ENCODE measurements at regions of chr20 and their contacts with region 1.

Region 1: GRCh38 chr20:23050847-23051631 is 1.6 kb upstream of the THBD start:
- DNase-seq: peak; percentile 86 to 91
- ATAC-seq: peak; percentile 34 to 51 (median 50)
- H3K4me3 ChIP-seq: peak overlapping the region; percentile 75
- H3K27ac ChIP-seq: peak overlapping the region; percentile 97
- H3K4me1 ChIP-seq: peaks cover 12% of the 10 kb centered on the region
- H3K27me3 ChIP-seq: no peaks in the 10 kb centered on the region
- CTCF ChIP-seq: peak; percentile 77

Region 2: DNA sequence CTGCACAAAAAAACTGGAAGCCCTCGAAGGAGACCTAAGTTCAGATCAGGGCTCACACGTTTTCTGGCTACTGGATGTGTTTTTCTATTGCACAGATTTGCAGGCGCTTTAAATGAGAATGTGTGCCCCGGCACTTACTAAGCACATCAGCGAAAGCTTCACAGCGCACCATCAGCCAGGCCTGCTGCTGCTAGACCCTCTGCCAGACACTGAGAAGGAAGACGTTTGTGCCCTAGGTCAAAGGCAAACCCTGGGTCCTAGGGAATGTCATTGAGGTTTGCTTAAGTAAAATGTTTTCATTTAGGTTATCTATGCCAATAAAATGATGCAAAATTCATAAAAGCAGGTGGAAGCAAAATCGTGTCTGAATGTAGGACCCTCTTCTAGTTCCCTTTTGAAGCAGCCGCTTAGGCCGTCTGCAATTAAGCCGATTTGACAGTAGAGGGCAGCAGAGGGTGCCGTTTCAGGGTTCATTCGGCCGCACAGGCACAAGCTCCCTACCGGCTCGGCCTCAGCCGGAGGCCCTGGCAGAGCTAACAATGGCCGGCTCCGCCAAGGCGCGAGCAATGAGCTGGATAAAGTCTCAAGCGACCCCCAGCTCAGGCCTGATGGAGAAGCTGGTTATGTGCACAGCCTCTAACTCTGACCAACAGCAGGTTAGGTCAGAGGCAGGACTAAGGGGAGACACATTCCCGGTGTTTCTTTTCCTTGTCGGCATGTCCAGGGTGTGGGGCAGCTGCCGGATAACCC is 359.5 kb before region 1 on chr20:
- intact Hi-C with region 1: loop called (anchors 2 to 10 kb)
- DNase-seq: peak; percentile 73 to 85
- ATAC-seq: peak; percentile 93 to 97 (median 97)
- H3K4me3 ChIP-seq: peak overlapping the region; percentile 45
- H3K27ac ChIP-seq: no peak overlapping the region
- H3K4me1 ChIP-seq: peaks cover 17% of the 10 kb centered on the region
- H3K27me3 ChIP-seq: no peaks in the 10 kb centered on the region
- CTCF ChIP-seq: peak; percentile 93

Region 3: GRCh38 chr20:23086056-23086566 is 35.1 kb after region 1 on chr20 and contains the start of gene CD93:
- intact Hi-C with region 1: loop called in 1 of 2 experiments (anchors 5 kb)
- DNase-seq: no peak
- ATAC-seq: peak; percentile 21 to 56 (median 37)
- H3K4me3 ChIP-seq: peak within 1 kb of the TSS; percentile 67
- H3K27ac ChIP-seq: peak within 1 kb of the TSS; percentile 82
- H3K4me1 ChIP-seq: no peaks in the 10 kb centered on the region
- H3K27me3 ChIP-seq: no peaks in the 10 kb centered on the region
- CTCF ChIP-seq: no peak
- total RNA-seq, gene CD93: 17.6 to 35.7 (median 34.6) TPM

Region 4: DNA sequence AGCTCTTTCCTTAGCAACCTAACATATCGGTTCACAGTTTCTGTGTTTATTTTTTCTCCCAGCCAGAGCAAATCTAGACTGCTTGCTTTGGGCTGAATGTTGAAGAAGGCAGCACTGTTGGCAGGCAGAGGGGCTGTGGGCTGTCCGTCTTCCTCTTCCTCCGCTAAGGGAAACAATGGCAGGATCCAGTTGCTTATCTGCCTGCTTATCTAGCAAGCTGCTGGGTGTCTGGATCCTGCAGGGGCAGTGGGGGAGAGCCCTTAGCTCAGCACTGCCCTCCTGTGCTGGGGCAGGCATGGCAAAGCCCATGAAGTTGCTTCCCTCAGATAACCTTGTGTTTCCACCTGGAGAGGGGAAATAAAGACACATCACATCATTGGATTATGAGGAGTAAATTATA is 127.8 kb after region 1 on chr20:
- intact Hi-C with region 1: loop called in 1 of 2 experiments (anchors 2 kb)
- DNase-seq: peak in 1 of 2 donors; percentile 79
- ATAC-seq: peak; percentile 88 to 98 (median 97)
- H3K4me3 ChIP-seq: no peak overlapping the region
- H3K27ac ChIP-seq: peak overlapping the region; percentile 40
- H3K4me1 ChIP-seq: peaks cover 10% of the 10 kb centered on the region
- H3K27me3 ChIP-seq: no peaks in the 10 kb centered on the region
- CTCF ChIP-seq: peak; percentile 77

Region 5: DNA sequence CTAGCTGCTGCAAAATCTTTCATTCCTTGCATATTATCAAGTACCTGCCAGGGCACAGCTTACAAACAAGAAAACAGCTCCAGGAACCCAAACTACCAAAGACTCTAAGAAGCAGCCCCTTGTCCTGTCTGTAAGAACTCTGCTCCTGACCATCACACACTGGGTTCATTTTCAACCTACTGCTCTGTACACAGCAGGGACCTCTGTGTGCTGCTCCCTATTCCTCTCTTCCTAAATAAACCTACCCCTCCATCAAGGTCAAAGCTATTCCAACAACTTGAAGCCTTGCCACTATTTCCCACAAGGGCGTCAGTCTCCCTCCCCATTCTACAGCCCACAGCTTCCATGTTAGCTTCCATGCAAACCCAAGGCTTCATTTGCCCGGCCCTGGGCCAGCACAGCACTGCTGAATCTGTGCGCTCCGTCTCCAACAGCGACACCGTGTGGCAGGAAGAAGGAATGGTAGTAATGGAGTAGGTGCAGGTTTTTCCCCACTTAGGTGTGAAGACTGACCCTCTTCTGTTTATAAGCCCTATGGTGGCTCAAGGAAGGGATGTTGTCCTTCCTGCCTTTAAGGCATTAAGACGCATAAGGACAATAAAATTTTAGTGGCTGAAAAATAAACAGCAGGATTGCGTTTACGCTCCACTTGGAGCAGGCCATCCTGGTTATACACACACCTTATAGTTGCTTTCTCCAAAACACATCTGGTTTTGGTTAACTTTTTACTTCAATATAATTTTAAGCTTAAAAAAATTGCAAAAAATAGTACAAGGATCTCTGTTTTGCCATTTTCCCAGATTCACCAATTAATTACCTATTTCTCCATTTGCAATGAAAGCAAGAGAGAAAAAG is 184.4 kb after region 1 on chr20:
- intact Hi-C with region 1: loop called (anchors 10 kb)
- DNase-seq: peak; percentile 63 to 79
- ATAC-seq: peak; percentile 83 to 94 (median 93)
- H3K4me3 ChIP-seq: no peak overlapping the region
- H3K27ac ChIP-seq: no peak overlapping the region
- H3K4me1 ChIP-seq: no peaks in the 10 kb centered on the region
- H3K27me3 ChIP-seq: no peaks in the 10 kb centered on the region
- CTCF ChIP-seq: peak; percentile 67

Region 6: DNA sequence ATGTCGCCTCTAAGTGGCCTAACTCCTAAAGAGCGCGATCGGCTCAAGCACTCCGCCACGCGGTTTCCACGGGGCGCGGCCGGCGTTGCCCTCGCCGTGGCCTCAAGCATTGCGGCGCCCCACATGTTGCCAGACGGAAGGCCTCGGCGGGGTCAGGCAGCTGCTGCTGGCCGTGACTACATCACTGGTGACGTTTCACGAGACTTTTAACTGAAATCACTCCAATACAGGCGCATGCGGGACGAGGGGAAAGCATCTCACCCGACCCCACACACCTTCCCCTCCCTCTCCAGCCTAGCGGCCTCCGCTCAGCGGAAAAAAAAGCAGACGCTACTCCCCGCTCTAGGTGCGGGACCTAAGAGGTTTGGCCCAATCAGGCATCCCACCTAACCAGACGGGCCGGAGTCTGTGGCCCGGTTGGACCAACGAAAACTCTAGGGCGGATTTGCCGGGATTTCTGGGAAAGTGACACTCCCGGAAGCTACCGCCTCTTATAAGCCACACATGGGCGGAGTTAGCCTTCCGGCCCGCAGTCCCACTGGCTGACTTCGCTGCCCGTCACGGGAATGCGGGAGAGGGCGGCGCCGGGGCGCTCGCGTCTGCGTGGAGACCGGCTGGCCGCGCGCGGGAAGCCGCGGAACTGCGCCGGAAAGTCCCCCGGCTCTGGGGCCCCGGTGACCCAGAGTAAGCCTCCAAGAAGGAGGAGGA is 299.3 kb after region 1 on chr20 and contains the start of gene NXT1:
- intact Hi-C with region 1: loop called (anchors 5 kb)
- DNase-seq: peak; percentile 97
- ATAC-seq: peak; percentile 93 to 94 (median 93)
- H3K4me3 ChIP-seq: peak within 1 kb of the TSS; percentile 91
- H3K27ac ChIP-seq: peak within 1 kb of the TSS; percentile 99
- H3K4me1 ChIP-seq: peaks cover 13% of the 10 kb centered on the region
- H3K27me3 ChIP-seq: no peaks in the 10 kb centered on the region
- CTCF ChIP-seq: no peak
- total RNA-seq, gene NXT1: 6.7 to 18.9 (median 11.1) TPM

Measured in psoas muscle (tissue), 8 donors.